Mammary epithelial cell (primary cell): ENCODE measurements at regions of chr12 and their contacts with region 1.

Region 1: GRCh38 chr12:30847259-30847658 is 79.3 kb upstream of the TSPAN11 start:
- DNase-seq: peak; percentile 59
- H3K4me3 ChIP-seq: no peak overlapping the region
- H3K27ac ChIP-seq: no peak overlapping the region
- H3K4me1 ChIP-seq: no peaks in the 10 kb centered on the region
- H3K27me3 ChIP-seq: no peaks in the 10 kb centered on the region
- CTCF ChIP-seq: peak; percentile 68 to 74

Region 2: GRCh38 chr12:29317556-29318363 is 1529.5 kb before region 1 on chr12:
- CTCF ChIA-PET with region 1: no interaction called
- dilution Hi-C with region 1: no loop called
- in situ Hi-C with region 1: no loop called
- intact Hi-C with region 1: loop called (anchors 10 kb)
- DNase-seq: peak; percentile 52
- H3K4me3 ChIP-seq: no peak overlapping the region
- H3K27ac ChIP-seq: no peak overlapping the region
- H3K4me1 ChIP-seq: peaks cover 10% of the 10 kb centered on the region
- H3K27me3 ChIP-seq: no peaks in the 10 kb centered on the region
- CTCF ChIP-seq: peak; percentile 49 to 84

Region 3: DNA sequence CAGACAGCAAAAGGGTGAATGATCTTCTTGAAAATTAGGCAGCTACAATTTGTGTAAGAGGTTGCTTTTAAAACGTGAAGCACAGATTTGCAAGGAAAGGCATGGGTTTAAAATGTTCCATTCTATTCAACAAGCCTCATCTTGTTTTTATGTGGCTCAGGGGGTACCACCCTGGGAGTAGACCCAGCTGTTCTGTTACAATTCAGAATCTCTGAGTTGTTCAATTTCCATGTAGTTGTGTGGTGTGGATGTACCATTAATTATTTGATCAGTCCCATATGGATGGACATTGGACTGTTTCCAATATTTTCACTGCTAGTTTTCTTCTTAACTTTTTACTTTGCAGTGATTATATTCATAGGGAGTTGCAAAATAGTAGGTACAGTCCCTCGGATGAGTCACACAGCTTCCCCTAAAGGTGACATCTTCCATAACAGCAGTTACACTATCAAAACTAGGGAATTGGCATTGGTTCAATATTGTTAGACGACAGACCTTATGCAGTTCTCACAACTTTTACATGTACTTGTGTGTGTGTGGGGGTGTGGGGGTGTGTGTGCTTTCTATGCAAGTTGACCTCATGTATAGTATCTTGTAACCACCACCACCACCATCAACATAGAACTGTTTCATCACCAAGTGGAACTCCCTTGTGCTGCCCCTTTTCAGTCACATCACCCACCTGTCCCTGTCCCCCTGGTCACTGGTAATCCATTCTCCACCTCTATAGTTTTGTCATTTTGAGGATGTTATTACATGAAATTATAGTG is 33.5 kb before region 1 on chr12:
- CTCF ChIA-PET with region 1: no interaction called
- dilution Hi-C with region 1: no loop called
- in situ Hi-C with region 1: no loop called
- intact Hi-C with region 1: no loop called
- DNase-seq: peak; percentile 41
- H3K4me3 ChIP-seq: no peak overlapping the region
- H3K27ac ChIP-seq: no peak overlapping the region
- H3K4me1 ChIP-seq: peaks cover 9% of the 10 kb centered on the region
- H3K27me3 ChIP-seq: no peaks in the 10 kb centered on the region
- CTCF ChIP-seq: no peak

Region 4: DNA sequence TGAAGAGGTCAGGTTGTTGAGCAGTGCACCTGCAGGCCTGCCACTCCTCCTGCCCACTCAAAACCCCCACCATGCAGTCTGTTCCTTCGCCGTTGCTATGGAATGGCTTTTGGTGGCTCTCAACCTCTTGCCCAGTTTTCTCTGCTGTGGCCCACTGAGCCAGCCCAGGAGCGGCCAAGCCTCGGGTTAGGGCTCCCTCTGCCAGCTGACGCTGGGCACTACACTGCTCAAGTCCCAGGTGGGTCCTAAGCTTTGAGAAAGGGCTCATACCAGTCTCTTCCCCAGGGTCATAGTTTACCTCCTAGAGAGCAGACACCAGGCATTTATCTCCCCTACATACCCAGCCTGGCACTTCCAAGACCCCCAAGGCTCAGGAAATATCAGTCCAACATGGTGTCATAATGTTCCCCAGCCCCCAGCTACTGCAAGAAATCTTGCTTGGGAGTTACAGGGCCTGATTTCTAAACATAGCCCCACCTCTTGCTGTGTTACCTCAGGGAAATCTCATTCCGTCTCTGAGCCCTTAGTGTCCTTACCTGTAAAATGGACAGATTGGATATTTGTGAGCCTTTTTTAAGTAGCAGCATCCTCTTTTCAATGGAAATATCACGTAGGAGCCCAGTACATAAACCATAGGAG is 138.7 kb after region 1 on chr12:
- CTCF ChIA-PET with region 1: interaction called, 4 read pairs
- dilution Hi-C with region 1: no loop called
- in situ Hi-C with region 1: loop called in 1 of 2 experiments (anchors 10 kb)
- intact Hi-C with region 1: loop called (anchors 1 kb)
- DNase-seq: peak; percentile 17
- H3K4me3 ChIP-seq: no peak overlapping the region
- H3K27ac ChIP-seq: no peak overlapping the region
- H3K4me1 ChIP-seq: no peaks in the 10 kb centered on the region
- H3K27me3 ChIP-seq: no peaks in the 10 kb centered on the region
- CTCF ChIP-seq: peak; percentile 70 to 93

Region 5: GRCh38 chr12:31057671-31058070 is 210.4 kb after region 1 on chr12:
- CTCF ChIA-PET with region 1: no interaction called
- dilution Hi-C with region 1: no loop called
- in situ Hi-C with region 1: no loop called
- intact Hi-C with region 1: loop called (anchors 5 kb)
- DNase-seq: no peak
- H3K4me3 ChIP-seq: no peak overlapping the region
- H3K27ac ChIP-seq: no peak overlapping the region
- H3K4me1 ChIP-seq: no peaks in the 10 kb centered on the region
- H3K27me3 ChIP-seq: no peaks in the 10 kb centered on the region
- CTCF ChIP-seq: no peak

Region 6: GRCh38 chr12:31238764-31239387 is 391.6 kb after region 1 on chr12:
- CTCF ChIA-PET with region 1: no interaction called
- dilution Hi-C with region 1: no loop called
- in situ Hi-C with region 1: loop called (anchors 10 kb)
- intact Hi-C with region 1: loop called (anchors 1 kb)
- DNase-seq: peak; percentile 61
- H3K4me3 ChIP-seq: no peak overlapping the region
- H3K27ac ChIP-seq: no peak overlapping the region
- H3K4me1 ChIP-seq: no peaks in the 10 kb centered on the region
- H3K27me3 ChIP-seq: peaks cover 5% of the 10 kb centered on the region
- CTCF ChIP-seq: peak; percentile 93 to 97

Region 7: GRCh38 chr12:31245822-31246469 is 398.7 kb after region 1 on chr12:
- CTCF ChIA-PET with region 1: interaction called, 3 read pairs
- dilution Hi-C with region 1: no loop called
- in situ Hi-C with region 1: no loop called
- intact Hi-C with region 1: loop called (anchors 1 kb)
- DNase-seq: no peak
- H3K4me3 ChIP-seq: peak overlapping the region in 2 of 3 experiments; percentile 1 to 11
- H3K27ac ChIP-seq: peak overlapping the region; percentile 27
- H3K4me1 ChIP-seq: no peaks in the 10 kb centered on the region
- H3K27me3 ChIP-seq: no peaks in the 10 kb centered on the region
- CTCF ChIP-seq: peak; percentile 43 to 55

Region 8: DNA sequence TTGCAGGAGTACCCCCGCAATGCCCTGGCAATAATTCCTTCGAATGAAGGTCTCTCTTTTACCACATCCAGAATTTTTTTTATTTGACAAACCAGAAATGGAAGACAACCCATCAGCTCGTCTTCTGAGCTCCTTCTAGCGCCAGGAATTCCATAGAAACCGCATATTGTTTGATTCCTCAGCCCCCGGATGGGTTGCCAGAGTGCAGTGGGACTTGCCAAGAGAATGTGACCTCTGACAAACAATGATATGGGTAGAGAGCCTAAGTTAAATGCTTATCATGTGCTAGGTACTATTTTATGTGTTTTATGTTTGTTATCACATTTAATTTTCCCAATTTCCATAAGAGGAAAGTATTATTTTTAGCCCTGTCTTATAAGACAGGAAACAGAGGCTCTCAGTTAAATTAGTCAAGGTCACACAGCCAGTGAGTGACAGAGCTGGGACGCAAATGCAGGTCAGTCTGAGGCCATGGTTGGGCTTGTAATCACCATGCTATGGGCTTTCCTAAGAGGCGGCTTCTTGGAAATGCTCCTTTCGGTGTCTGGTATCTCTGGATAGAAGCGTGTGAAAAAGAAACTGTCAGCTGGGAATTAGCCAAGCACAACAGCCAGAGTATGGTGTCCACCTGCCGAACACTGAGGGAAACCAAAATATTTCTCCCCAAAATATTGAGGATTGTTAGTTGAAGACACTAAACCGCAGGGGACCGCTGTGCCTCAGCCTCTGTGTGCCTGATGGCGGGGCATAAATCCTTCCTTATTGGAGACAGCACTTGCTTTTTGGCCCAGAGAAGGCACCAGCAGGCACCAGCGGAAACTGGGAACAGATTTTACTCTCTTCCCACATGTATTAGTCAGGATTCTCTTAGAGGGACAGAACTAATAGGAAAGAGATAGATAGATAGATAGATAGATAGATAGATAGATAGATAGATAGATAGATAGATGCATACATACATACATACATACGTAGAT is 782.8 kb after region 1 on chr12:
- CTCF ChIA-PET with region 1: no interaction called
- dilution Hi-C with region 1: no loop called
- in situ Hi-C with region 1: no loop called
- intact Hi-C with region 1: loop called (anchors 10 kb)
- DNase-seq: no peak
- H3K4me3 ChIP-seq: no peak overlapping the region
- H3K27ac ChIP-seq: no peak overlapping the region
- H3K4me1 ChIP-seq: no peaks in the 10 kb centered on the region
- H3K27me3 ChIP-seq: no peaks in the 10 kb centered on the region
- CTCF ChIP-seq: no peak